Activated naive CD4-positive, alpha-beta T cell treated with anti-CD3 and anti-CD28 coated beads for 36 hours (primary cell): ENCODE measurements at regions of chr15 and their contacts with region 1.

Region 1: GRCh38 chr15:85707519-85708338 is 87.0 kb downstream of the KLHL25 start:
- DNase-seq: peak; percentile 51
- H3K4me3 Mint-ChIP-seq: peak overlapping the region; percentile 79
- H3K27ac Mint-ChIP-seq: peak overlapping the region; percentile 99
- H3K4me1 Mint-ChIP-seq: peaks cover 87% of the 10 kb centered on the region
- H3K27me3 Mint-ChIP-seq: no peaks in the 10 kb centered on the region

Region 2: GRCh38 chr15:85723960-85724945 is 16.5 kb after region 1 on chr15:
- CTCF ChIA-PET with region 1: interaction called, 8 read pairs
- intact Hi-C with region 1: loop called (anchors 1 kb)
- DNase-seq: peak; percentile 41
- H3K4me3 Mint-ChIP-seq: peak overlapping the region; percentile 43
- H3K27ac Mint-ChIP-seq: peak overlapping the region; percentile 97
- H3K4me1 Mint-ChIP-seq: peaks cover 67% of the 10 kb centered on the region
- H3K27me3 Mint-ChIP-seq: no peaks in the 10 kb centered on the region